ENCODE measurements at regions of chr10 and their contacts with region 1.

Region 1: GRCh38 chr10:93622942-93623341 is 10.6 kb downstream of the PDE6C start:
- DNase-seq: peak; percentile 67
- H3K4me3 ChIP-seq: peak overlapping the region; percentile 44
- H3K27ac ChIP-seq: peak overlapping the region; percentile 96
- H3K4me1 ChIP-seq: peaks cover 88% of the 10 kb centered on the region
- CTCF ChIP-seq: no peak

Region 2: DNA sequence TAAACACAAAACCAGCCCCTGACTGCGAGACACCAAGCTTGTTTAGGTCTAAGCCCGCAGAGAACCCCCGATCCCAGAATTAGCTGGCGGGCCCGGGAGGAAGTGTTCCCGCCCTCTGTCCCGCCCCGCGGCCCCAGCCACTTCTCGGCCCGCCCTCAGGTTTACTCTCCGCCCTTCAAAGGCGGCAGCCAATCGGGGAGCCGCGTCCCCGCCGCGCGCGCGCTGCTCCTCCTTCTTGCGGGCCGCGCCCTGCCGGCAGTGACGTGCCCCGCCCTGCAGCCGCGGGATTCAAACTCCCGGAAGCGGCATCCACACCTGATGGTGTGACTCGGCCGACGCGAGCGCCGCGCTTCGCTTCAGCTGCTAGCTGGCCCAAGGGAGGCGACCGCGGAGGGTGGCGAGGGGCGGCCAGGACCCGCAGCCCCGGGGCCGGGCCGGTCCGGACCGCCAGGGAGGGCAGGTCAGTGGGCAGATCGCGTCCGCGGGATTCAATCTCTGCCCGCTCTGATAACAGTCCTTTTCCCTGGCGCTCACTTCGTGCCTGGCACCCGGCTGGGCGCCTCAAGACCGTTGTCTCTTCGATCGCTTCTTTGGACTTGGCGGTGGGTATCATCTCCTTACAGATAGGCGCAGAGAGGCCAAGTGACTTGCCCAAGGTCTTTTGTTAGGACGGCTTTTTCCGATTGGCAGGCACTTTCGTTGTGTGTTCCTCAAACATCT is 126.5 kb before region 1 on chr10 and contains the start of gene CEP55:
- CTCF ChIA-PET with region 1: no interaction called
- POLR2A ChIA-PET with region 1: no interaction called
- intact Hi-C with region 1: loop called (anchors 5 kb)
- DNase-seq: peak; percentile 96
- H3K4me3 ChIP-seq: peak within 1 kb of the TSS; percentile 97
- H3K27ac ChIP-seq: peak within 1 kb of the TSS; percentile 73
- H3K4me1 ChIP-seq: peaks cover 42% of the 10 kb centered on the region
- CTCF ChIP-seq: no peak
- total RNA-seq, gene CEP55: 64.5 and 83.0 TPM in 2 replicates

Region 3: GRCh38 chr10:93600446-93601145 is 22.3 kb before region 1 on chr10:
- CTCF ChIA-PET with region 1: no interaction called
- POLR2A ChIA-PET with region 1: no interaction called
- intact Hi-C with region 1: no loop called
- DNase-seq: no peak
- H3K4me3 ChIP-seq: no peak overlapping the region
- H3K27ac ChIP-seq: no peak overlapping the region
- H3K4me1 ChIP-seq: peaks cover 20% of the 10 kb centered on the region
- CTCF ChIP-seq: no peak